ENCODE measurements at regions of chr14 and their contacts with region 1.

Region 1: GRCh38 chr14:51395361-51395849 is 155.4 kb downstream of the TMX1 start:
- DNase-seq: no peak
- ATAC-seq: no peak
- H3K4me3 ChIP-seq: no peak overlapping the region
- H3K4me3 Mint-ChIP-seq: no peak overlapping the region
- H3K27ac ChIP-seq: no peak overlapping the region
- H3K27ac Mint-ChIP-seq: no peak overlapping the region
- H3K4me1 ChIP-seq: no peaks in the 10 kb centered on the region
- H3K4me1 Mint-ChIP-seq: no peaks in the 10 kb centered on the region
- H3K27me3 ChIP-seq: peaks cover 0 to 10% of the 10 kb centered on the region in 2 experiments
- H3K27me3 Mint-ChIP-seq: peaks cover 6 to 30% of the 10 kb centered on the region in 2 donors

Region 2: DNA sequence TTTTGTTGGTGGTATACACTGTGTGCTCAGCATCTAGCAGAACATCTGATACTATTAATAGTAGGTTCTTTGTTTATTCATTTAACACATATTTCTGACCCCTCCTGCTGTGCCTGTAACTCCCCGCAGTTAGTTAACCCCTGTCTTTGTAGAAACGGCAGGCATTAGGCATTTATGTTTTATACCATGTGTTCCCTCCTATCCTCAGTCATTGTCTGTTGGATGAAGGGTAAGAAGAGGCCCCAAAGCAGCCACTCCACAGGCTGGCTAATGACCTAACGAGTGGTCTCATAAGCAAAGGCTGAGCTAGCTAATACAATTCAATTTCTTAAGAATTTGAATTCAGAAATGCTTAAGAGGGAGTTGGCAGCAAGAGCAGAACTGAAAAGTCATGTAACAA is 15.5 kb after region 1 on chr14:
- CTCF ChIA-PET with region 1: interaction called in 1 of 2 experiments, 10 read pairs
- POLR2A ChIA-PET with region 1: interaction called in 1 of 2 experiments, 8 read pairs
- DNase-seq: no peak
- ATAC-seq: no peak
- H3K4me3 ChIP-seq: no peak overlapping the region
- H3K4me3 Mint-ChIP-seq: no peak overlapping the region
- H3K27ac ChIP-seq: no peak overlapping the region
- H3K27ac Mint-ChIP-seq: no peak overlapping the region
- H3K4me1 ChIP-seq: no peaks in the 10 kb centered on the region
- H3K4me1 Mint-ChIP-seq: no peaks in the 10 kb centered on the region
- H3K27me3 ChIP-seq: peaks cover 0 to 4% of the 10 kb centered on the region in 2 experiments
- H3K27me3 Mint-ChIP-seq: peaks cover 20 to 36% of the 10 kb centered on the region in 2 donors